GM13976 (cell line): ENCODE measurements at regions of chr7 and their contacts with region 1.

Region 1: DNA sequence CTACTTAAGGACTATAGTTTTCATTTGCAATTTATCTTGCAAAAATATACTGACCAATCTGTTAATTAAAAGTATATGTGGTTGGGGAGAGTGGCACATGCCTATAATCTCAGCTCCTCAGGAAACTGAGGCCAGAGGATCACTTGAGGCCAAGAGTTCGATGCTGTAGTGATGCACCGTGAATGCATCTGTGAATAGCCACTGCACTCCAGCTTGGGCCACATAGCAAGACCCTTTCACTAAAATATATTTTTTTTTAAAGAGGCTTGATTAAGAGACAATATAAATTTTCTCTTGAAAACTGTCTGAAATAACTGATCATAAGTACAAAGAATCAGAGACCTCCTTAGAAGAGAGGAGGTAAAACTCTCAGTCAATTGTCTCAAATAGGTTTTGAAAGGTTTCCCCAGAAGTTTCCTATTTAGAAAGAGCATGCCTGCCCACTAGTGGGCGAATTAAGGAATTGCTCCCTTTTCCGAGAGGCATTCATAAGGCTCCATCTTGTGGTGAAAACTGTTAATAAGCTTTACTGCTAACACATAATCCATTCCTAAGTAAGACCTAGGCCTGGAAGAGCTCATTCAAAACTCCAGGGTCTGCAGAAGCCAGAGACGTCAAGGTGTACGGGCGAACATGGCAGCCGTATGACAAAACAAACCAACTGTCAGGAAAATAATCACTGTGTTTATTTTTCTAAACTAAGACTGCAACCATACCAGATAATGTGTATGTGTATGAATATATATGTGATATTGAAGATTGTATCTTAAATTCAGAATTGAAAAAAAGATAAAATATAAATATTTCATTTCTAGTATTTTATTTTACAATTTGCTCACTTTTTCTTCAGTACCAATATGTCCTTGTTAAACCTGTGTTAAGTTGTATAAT is 6.8 kb upstream of the TAS2R40 start:
- DNase-seq: peak; percentile 75
- CTCF ChIP-seq: peak; percentile 93

Region 2: GRCh38 chr7:142603870-142604448 is 611.1 kb before region 1 on chr7:
- in situ Hi-C with region 1: no loop called
- DNase-seq: peak; percentile 62
- CTCF ChIP-seq: peak; percentile 78

Region 3: DNA sequence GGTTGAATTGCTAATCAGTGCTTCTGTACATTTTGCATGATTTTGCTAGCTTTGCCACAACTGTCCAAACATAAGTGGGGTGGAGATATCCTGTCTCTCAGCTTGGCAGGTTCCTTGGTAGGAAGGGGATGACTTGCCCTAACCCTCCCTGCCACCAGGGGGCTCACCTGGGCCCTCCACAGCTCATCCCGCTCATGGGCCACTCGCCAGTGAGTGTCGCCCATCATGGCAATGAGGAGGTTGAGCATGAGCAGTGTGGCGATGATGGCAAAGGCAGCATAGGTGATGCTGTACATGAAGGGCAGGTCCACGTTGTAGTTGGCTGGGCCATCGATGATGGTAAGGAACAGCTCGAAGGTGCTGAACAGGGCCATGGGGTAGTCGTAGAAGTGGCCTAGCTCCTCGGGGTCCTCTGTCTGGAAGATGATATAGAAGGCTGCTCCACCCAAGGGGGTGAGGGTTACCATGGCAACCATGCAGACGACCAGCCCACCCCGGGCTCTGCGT is 341.7 kb before region 1 on chr7:
- in situ Hi-C with region 1: no loop called
- DNase-seq: peak; percentile 72
- CTCF ChIP-seq: no peak

Region 4: GRCh38 chr7:143013893-143014292 is 201.1 kb before region 1 on chr7:
- in situ Hi-C with region 1: loop called (anchors 5 kb)
- DNase-seq: no peak
- CTCF ChIP-seq: no peak